ENCODE measurements at regions of chr13 and their contacts with region 1.

Region 1: GRCh38 chr13:67224148-67224846 is 5.8 kb downstream of the PCDH9 start:
- DNase-seq: peak; percentile 81
- H3K4me3 ChIP-seq: peak overlapping the region; percentile 27
- H3K27ac ChIP-seq: no peak overlapping the region
- H3K4me1 ChIP-seq: peaks cover 6% of the 10 kb centered on the region
- H3K27me3 ChIP-seq: no peaks in the 10 kb centered on the region
- CTCF ChIP-seq: peak; percentile 69

Region 2: GRCh38 chr13:66618702-66619101 is 605.6 kb before region 1 on chr13:
- CTCF ChIA-PET with region 1: interaction called, 3 read pairs
- POLR2A ChIA-PET with region 1: no interaction called
- intact Hi-C with region 1: loop called (anchors 5 kb)
- DNase-seq: peak; percentile 44
- H3K4me3 ChIP-seq: no peak overlapping the region
- H3K27ac ChIP-seq: no peak overlapping the region
- H3K4me1 ChIP-seq: no peaks in the 10 kb centered on the region
- H3K27me3 ChIP-seq: no peaks in the 10 kb centered on the region
- CTCF ChIP-seq: peak; percentile 52; the same call in 1 of the 2 replicates

Region 3: DNA sequence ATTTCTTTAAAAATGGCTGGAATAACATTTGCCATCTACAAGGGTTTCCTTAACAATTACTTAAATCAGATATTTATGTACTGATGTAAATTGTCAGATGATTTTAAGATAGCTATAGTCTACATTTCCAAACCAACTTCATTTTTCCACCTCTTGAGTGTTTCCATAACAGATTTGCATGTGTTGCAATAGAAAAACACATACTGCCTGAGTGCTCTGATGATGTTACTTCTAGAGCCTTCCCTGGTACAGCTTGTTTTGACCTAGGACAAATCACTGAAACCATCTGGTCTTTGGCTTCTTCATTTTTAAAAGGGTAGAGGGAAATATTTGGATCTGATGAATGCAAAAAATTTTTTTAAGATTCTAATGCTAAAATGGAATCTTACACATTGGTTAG is 240.1 kb before region 1 on chr13:
- CTCF ChIA-PET with region 1: no interaction called
- POLR2A ChIA-PET with region 1: no interaction called
- intact Hi-C with region 1: loop called (anchors 10 kb)
- DNase-seq: no peak
- H3K4me3 ChIP-seq: no peak overlapping the region
- H3K27ac ChIP-seq: no peak overlapping the region
- H3K4me1 ChIP-seq: no peaks in the 10 kb centered on the region
- H3K27me3 ChIP-seq: no peaks in the 10 kb centered on the region
- CTCF ChIP-seq: no peak

Measured in A673 (cell line).